ENCODE measurements at regions of chr20 and their contacts with region 1.

Region 1: DNA sequence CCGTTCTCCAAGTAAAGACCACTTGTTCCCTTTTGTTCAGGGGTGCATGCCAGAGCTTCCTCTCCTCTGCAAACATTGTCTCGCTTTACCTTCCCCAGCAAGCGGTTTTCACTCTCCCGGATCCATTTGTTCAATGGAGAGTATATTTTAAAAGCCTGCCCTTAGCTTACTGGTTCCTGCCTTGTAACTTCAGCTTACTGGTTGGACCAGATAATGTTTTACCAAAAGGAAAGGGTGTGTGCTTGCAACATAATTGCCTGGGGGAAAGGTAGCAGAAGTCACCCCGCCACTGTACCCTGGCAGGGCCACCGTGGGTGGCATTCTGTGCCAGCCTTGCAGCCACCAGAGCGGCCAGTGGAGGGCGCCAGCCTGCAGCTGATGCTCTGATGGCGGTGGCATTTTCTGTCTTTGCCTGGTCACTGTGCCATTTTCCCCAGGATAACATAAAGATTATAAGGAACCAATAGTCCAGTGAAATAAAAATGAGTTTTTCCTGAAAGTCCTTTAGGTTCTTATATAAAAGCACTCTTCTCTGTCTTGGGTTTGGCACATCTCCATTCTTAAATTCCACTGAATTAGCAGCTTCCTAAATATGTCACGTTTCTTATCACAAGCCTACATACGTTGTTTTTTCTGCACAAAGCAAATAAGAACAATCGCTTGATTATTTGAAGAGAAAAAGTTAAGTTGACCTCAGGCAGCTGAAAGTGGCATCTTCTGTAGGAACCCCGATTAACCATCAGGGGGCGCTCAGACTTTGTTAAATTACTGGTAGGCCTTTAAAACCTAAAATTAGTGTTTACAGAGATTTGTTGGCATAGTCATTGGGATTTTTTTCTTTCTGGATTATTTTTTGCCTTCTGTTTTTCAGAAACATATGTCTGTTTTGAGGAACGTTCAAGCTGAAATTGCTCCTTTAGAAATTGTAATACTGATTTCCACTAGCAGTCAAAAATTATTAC is 67.4 kb upstream of the XRN2 start:
- DNase-seq: peak; percentile 72
- H3K4me3 Mint-ChIP-seq: no peak overlapping the region
- H3K27ac Mint-ChIP-seq: no peak overlapping the region
- H3K4me1 Mint-ChIP-seq: peaks cover 5% of the 10 kb centered on the region
- H3K27me3 Mint-ChIP-seq: no peaks in the 10 kb centered on the region
- CTCF ChIP-seq: peak; percentile 75

Region 2: DNA sequence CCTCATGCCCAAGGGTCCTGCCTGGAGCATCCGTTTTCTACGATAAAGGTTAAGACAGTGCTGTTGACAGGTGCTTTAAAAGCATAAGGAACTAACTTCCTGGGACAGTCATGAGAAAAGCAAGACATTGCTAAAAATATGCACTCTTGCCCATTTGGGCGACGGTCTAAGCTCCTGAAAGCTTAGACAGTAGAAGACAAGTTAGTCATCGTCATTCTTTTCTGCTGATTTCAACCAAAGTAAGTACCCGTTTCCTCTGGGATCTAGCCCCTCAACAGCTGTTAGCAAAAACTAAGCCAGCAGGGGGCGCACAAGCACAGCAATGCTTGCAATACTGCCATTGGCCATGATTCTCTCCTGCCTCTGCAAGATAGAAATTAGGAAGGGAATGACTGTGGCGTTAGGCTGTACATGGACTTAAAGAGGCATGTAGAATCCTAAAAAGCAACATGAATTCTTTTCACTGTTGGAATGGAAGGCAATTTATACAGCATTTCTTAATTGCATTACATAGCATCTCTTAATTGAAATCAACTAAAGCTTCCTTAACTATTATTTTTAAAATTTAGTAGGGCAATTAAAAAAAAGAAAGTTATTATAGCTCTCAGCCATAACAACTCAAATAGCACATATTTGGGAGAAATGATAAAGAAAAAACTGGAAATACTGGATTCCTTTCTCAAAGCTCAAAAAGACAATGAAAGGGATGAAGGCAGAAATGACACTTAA is 375.5 kb before region 1 on chr20:
- CTCF ChIA-PET with region 1: interaction called, 226 read pairs
- POLR2A ChIA-PET with region 1: interaction called, 8 read pairs
- intact Hi-C with region 1: loop called (anchors 1 kb)
- DNase-seq: peak; percentile 89
- H3K4me3 Mint-ChIP-seq: no peak overlapping the region
- H3K27ac Mint-ChIP-seq: no peak overlapping the region
- H3K4me1 Mint-ChIP-seq: peaks cover 9% of the 10 kb centered on the region
- H3K27me3 Mint-ChIP-seq: no peaks in the 10 kb centered on the region
- CTCF ChIP-seq: peak; percentile 85

Region 3: DNA sequence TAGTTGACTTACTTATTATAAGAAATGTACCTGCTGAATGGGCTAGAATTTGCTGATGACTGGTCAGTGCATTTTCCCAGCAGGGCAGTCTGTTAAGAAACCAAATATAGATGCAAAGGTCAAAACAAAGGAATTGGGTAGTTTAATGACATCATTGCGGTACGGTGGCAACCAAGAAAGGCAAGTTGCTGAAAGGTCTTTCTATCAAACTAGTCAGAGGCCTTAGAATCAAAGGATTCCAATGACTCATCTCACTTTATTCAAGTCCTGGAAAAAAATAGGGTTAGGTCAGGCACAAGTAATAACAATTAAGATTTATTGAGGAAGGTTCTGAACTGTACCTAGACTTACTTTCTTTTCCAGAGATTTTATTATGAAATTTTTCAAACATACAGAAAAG is 33.5 kb before region 1 on chr20:
- CTCF ChIA-PET with region 1: interaction called, 24 read pairs
- POLR2A ChIA-PET with region 1: interaction called, 3 read pairs
- intact Hi-C with region 1: no loop called
- DNase-seq: peak; percentile 54
- H3K4me3 Mint-ChIP-seq: no peak overlapping the region
- H3K27ac Mint-ChIP-seq: no peak overlapping the region
- H3K4me1 Mint-ChIP-seq: no peaks in the 10 kb centered on the region
- H3K27me3 Mint-ChIP-seq: no peaks in the 10 kb centered on the region
- CTCF ChIP-seq: no peak

Region 4: DNA sequence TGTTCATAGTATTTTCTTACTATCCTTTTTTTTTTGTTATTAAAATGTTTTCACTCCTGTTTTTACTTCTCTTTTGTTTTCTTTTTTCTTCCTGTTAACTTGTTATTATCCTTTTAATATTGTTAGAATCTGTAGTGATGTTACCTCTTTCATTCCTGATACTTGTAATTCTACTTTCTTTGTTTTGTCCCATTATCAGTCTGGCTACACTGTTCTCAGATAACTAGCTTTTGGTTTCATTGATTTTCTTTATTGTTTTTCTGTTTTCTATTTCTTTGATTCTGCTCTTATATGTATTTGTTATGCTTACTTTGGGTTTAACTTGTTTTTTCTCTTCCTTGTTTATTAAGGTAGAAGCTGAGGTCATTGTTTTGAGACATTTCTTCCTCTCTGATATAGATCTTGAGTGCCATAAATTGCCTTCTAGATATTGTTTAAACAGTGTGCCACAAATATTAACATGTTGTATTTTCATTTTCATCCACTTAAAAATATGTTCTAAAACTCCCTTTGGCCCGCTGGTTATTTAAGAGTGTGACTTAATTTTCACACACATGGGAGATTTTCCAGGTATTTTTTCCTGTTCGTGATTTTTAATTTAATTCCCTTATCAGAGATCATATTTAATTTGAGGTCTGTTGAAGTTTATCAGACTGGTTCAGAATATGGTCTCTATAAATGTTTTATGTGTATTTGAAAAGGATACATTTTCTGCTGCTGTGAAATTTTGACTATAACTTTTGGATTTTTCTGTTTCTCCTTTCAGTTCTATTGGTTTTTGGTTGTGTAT is 74.1 kb after region 1 on chr20:
- CTCF ChIA-PET with region 1: interaction called, 33 read pairs
- POLR2A ChIA-PET with region 1: no interaction called
- intact Hi-C with region 1: no loop called
- DNase-seq: no peak
- H3K4me3 Mint-ChIP-seq: no peak overlapping the region
- H3K27ac Mint-ChIP-seq: peak overlapping the region; percentile 27
- H3K4me1 Mint-ChIP-seq: peaks cover 18% of the 10 kb centered on the region
- H3K27me3 Mint-ChIP-seq: no peaks in the 10 kb centered on the region
- CTCF ChIP-seq: no peak

Region 5: GRCh38 chr20:21373436-21373835 is 137.7 kb after region 1 on chr20:
- CTCF ChIA-PET with region 1: interaction called, 20 read pairs
- POLR2A ChIA-PET with region 1: no interaction called
- intact Hi-C with region 1: no loop called
- DNase-seq: no peak
- H3K4me3 Mint-ChIP-seq: no peak overlapping the region
- H3K27ac Mint-ChIP-seq: peak overlapping the region; percentile 44
- H3K4me1 Mint-ChIP-seq: peaks cover 5% of the 10 kb centered on the region
- H3K27me3 Mint-ChIP-seq: no peaks in the 10 kb centered on the region
- CTCF ChIP-seq: no peak

Region 6: DNA sequence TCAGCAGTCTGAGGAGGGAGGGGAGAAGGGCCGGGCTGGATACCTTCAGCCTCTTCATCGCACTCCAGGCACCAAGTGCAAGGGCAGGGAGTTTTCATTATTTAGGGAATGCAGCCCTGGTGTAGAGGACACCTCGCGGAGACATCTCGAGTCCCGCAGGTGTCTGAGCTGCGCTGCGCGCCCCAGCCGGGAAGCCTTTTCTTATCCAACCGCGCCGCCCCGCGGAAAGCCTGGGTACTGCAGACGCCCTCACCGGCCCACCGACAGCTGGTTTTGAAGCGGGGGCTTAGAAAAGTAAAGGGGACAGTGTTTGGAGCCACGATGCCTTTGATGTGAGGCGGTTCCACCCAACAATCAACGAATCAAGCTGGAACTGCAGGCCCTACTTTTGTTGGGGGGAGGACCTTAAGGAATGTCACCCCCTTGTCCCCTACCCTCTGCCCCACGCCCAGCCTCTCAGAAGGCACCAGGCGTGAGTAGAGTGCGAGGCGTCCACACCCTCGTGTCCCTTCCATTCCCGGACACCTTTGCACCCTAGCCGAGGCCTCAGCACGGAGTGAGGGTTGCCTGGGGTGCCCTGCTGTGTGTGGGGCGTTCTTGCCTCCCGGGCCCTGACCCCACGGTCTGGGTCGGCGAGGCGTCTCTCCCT is 269.5 kb after region 1 on chr20:
- CTCF ChIA-PET with region 1: interaction called, 329 read pairs
- POLR2A ChIA-PET with region 1: interaction called, 20 read pairs
- intact Hi-C with region 1: loop called (anchors 1 kb)
- DNase-seq: peak; percentile 48
- H3K4me3 Mint-ChIP-seq: peak overlapping the region; percentile 39
- H3K27ac Mint-ChIP-seq: no peak overlapping the region
- H3K4me1 Mint-ChIP-seq: no peaks in the 10 kb centered on the region
- H3K27me3 Mint-ChIP-seq: peaks cover 14% of the 10 kb centered on the region
- CTCF ChIP-seq: peak; percentile 99

Region 7: DNA sequence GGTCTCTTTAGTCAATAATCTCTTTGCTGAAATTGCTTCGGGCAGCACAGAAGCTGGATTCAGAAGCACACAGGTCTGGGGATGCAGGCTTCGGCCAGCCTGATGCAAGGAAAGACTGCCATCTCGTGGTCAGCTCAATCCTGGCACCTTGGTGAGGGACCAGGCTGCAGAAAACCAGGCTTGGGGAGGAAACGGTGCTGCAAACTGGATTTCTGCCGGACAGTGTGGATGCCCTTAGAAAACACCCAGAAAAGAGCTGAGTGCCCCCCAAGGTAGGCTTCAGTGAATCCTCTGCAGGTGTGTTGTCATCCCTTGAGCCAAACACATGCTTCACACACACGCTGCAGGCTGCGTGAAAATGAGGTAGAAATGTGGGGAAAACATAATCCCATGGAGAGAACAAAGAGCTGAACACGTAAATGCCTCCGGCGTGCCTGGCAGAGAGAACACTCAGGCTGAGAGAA is 379.9 kb after region 1 on chr20:
- CTCF ChIA-PET with region 1: interaction called, 63 read pairs
- POLR2A ChIA-PET with region 1: interaction called, 3 read pairs
- intact Hi-C with region 1: no loop called
- DNase-seq: peak; percentile 61
- H3K4me3 Mint-ChIP-seq: no peak overlapping the region
- H3K27ac Mint-ChIP-seq: no peak overlapping the region
- H3K4me1 Mint-ChIP-seq: no peaks in the 10 kb centered on the region
- H3K27me3 Mint-ChIP-seq: peaks cover 25% of the 10 kb centered on the region
- CTCF ChIP-seq: peak; percentile 83

Region 8: GRCh38 chr20:21643417-21643816 is 407.7 kb after region 1 on chr20:
- CTCF ChIA-PET with region 1: no interaction called
- POLR2A ChIA-PET with region 1: no interaction called
- intact Hi-C with region 1: no loop called
- DNase-seq: peak; percentile 24
- H3K4me3 Mint-ChIP-seq: no peak overlapping the region
- H3K27ac Mint-ChIP-seq: no peak overlapping the region
- H3K4me1 Mint-ChIP-seq: no peaks in the 10 kb centered on the region
- H3K27me3 Mint-ChIP-seq: peaks cover 17% of the 10 kb centered on the region
- CTCF ChIP-seq: no peak

Region 9: DNA sequence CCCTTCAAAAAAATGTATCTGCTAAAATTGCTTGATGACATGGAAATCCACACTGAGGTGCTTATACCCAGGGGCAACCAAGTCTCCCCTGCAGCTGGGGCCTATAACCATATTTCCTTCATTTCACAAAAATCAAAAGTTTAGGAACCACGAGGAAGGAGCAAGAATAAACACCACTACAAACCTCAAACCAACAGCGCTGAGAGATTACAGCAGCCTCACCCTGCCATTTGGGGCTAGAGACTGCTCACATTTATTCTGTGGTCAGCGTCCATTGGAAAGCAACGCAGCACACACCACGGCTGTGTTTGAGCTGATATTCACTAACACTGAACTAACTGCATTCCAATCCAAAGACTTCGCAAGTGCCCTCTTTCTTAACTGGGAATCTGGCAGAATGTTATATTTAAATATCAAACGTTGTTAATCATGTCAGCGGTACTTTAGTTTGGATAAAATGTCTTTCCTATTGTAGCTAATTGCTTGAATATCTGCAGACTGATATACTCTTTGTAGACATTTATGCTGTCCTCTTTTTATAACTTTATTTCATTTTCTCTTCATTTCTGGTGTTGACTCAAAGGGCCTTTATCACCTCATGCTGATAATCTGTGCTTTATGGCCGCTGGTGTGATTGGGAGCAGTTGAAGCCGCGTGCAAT is 1254.0 kb after region 1 on chr20:
- CTCF ChIA-PET with region 1: no interaction called
- POLR2A ChIA-PET with region 1: no interaction called
- intact Hi-C with region 1: no loop called
- DNase-seq: no peak
- H3K4me3 Mint-ChIP-seq: no peak overlapping the region
- H3K27ac Mint-ChIP-seq: no peak overlapping the region
- H3K4me1 Mint-ChIP-seq: no peaks in the 10 kb centered on the region
- H3K27me3 Mint-ChIP-seq: no peaks in the 10 kb centered on the region
- CTCF ChIP-seq: no peak